ENCODE measurements at regions of chr12 and their contacts with region 1.

Region 1: GRCh38 chr12:123365025-123365917 is 624 bp upstream of the SBNO1 start:
- DNase-seq: peak; percentile 98 to 99
- H3K4me3 ChIP-seq: peak overlapping the region; percentile 87
- H3K4me3 Mint-ChIP-seq: peak overlapping the region; percentile 99
- H3K27ac Mint-ChIP-seq: peak overlapping the region; percentile 99
- H3K4me1 ChIP-seq: 0 out of 2 replicates have a peak, but pooled peaks cover 4% of the 10 kb centered on the region
- H3K4me1 Mint-ChIP-seq: peaks cover 7% of the 10 kb centered on the region
- H3K27me3 ChIP-seq: no peaks in the 10 kb centered on the region
- H3K27me3 Mint-ChIP-seq: no peaks in the 10 kb centered on the region
- CTCF ChIP-seq: peak; percentile 79 to 87

Region 2: GRCh38 chr12:123187637-123188036 is 177.6 kb before region 1 on chr12:
- CTCF ChIA-PET with region 1: no interaction called
- POLR2A ChIA-PET with region 1: no interaction called
- intact Hi-C with region 1: no loop called
- DNase-seq: no peak
- H3K4me3 ChIP-seq: no peak overlapping the region
- H3K4me3 Mint-ChIP-seq: no peak overlapping the region
- H3K27ac Mint-ChIP-seq: no peak overlapping the region
- H3K4me1 ChIP-seq: no peaks in the 10 kb centered on the region
- H3K4me1 Mint-ChIP-seq: no peaks in the 10 kb centered on the region
- H3K27me3 ChIP-seq: no peaks in the 10 kb centered on the region
- H3K27me3 Mint-ChIP-seq: no peaks in the 10 kb centered on the region
- CTCF ChIP-seq: no peak

Region 3: GRCh38 chr12:123223241-123223668 is 142.0 kb before region 1 on chr12:
- CTCF ChIA-PET with region 1: no interaction called
- POLR2A ChIA-PET with region 1: no interaction called
- intact Hi-C with region 1: no loop called
- DNase-seq: no peak
- H3K4me3 ChIP-seq: no peak overlapping the region
- H3K4me3 Mint-ChIP-seq: no peak overlapping the region
- H3K27ac Mint-ChIP-seq: no peak overlapping the region
- H3K4me1 ChIP-seq: no peaks in the 10 kb centered on the region
- H3K4me1 Mint-ChIP-seq: no peaks in the 10 kb centered on the region
- H3K27me3 ChIP-seq: no peaks in the 10 kb centered on the region
- H3K27me3 Mint-ChIP-seq: no peaks in the 10 kb centered on the region
- CTCF ChIP-seq: no peak

Region 4: GRCh38 chr12:123243671-123244262 is 121.5 kb before region 1 on chr12:
- CTCF ChIA-PET with region 1: no interaction called
- POLR2A ChIA-PET with region 1: no interaction called
- intact Hi-C with region 1: no loop called
- DNase-seq: no peak
- H3K4me3 ChIP-seq: no peak overlapping the region
- H3K4me3 Mint-ChIP-seq: no peak overlapping the region
- H3K27ac Mint-ChIP-seq: no peak overlapping the region
- H3K4me1 ChIP-seq: no peaks in the 10 kb centered on the region
- H3K4me1 Mint-ChIP-seq: no peaks in the 10 kb centered on the region
- H3K27me3 ChIP-seq: no peaks in the 10 kb centered on the region
- H3K27me3 Mint-ChIP-seq: no peaks in the 10 kb centered on the region
- CTCF ChIP-seq: no peak

Region 5: DNA sequence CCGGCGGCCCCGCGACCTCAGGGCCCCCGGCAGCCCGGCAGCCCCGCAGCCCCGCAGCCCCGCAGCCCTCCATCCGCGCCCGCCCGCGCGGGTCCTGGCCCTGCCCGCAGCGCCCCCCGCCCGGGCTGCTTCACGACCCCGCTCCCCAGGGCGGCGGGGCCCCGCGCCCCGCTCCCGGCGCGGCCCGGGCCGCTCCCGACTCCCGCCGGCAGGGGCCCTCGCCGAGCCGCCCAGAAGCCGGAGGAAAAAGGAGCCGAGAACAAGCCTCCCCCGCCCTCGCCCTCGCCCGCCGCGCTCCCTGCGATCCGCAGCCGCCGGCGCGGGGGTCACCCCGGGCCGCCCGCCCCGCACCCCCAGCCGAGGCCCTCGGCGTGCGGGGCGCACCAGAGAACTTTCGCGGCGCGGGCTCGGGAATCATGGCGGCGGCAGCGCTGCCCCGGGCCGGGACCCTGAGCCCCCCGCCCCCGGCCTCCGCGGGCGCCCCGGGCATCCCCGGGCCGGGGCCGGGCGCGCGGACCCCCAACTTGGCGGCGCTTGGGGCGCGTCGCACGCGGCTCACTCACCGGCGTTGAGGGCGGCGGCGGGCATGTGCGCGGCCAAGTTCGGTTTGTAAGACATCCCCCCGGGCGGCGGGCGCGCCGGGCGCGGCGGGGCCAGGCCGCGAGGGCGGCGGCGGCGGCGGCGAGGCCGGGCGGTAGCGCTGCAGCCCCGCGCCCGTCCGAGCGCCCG is 94.1 kb before region 1 on chr12:
- CTCF ChIA-PET with region 1: no interaction called
- POLR2A ChIA-PET with region 1: no interaction called
- intact Hi-C with region 1: loop called (anchors 2 kb)
- DNase-seq: peak; percentile 69 to 83
- H3K4me3 ChIP-seq: peak overlapping the region; percentile 63
- H3K4me3 Mint-ChIP-seq: peak overlapping the region; percentile 77
- H3K27ac Mint-ChIP-seq: no peak overlapping the region
- H3K4me1 ChIP-seq: 0 out of 2 replicates have a peak, but pooled peaks cover 5% of the 10 kb centered on the region
- H3K4me1 Mint-ChIP-seq: no peaks in the 10 kb centered on the region
- H3K27me3 ChIP-seq: no peaks in the 10 kb centered on the region
- H3K27me3 Mint-ChIP-seq: no peaks in the 10 kb centered on the region
- CTCF ChIP-seq: peak; percentile 39 to 66

Region 6: GRCh38 chr12:123382684-123383083 is 17.4 kb after region 1 on chr12:
- CTCF ChIA-PET with region 1: interaction called, 36 read pairs
- POLR2A ChIA-PET with region 1: interaction called, 57 read pairs
- intact Hi-C with region 1: loop called (anchors 1 kb)
- DNase-seq: no peak
- H3K4me3 ChIP-seq: peak overlapping the region; percentile 5; the same call in 1 of the 2 replicates
- H3K4me3 Mint-ChIP-seq: peak overlapping the region; percentile 83
- H3K27ac Mint-ChIP-seq: peak overlapping the region; percentile 29
- H3K4me1 ChIP-seq: peaks cover 4% of the 10 kb centered on the region; the same call in 1 of the 2 replicates
- H3K4me1 Mint-ChIP-seq: peaks cover 9% of the 10 kb centered on the region
- H3K27me3 ChIP-seq: no peaks in the 10 kb centered on the region
- H3K27me3 Mint-ChIP-seq: no peaks in the 10 kb centered on the region
- CTCF ChIP-seq: no peak

Region 7: GRCh38 chr12:123388177-123388947 is 23.1 kb after region 1 on chr12:
- CTCF ChIA-PET with region 1: interaction called, 36 read pairs
- POLR2A ChIA-PET with region 1: interaction called, 57 read pairs
- intact Hi-C with region 1: loop called (anchors 1 kb)
- DNase-seq: peak; percentile 67 to 87
- H3K4me3 ChIP-seq: peak overlapping the region; percentile 88
- H3K4me3 Mint-ChIP-seq: peak overlapping the region; percentile 75
- H3K27ac Mint-ChIP-seq: peak overlapping the region; percentile 66
- H3K4me1 ChIP-seq: peaks cover 4% of the 10 kb centered on the region; the same call in 1 of the 2 replicates
- H3K4me1 Mint-ChIP-seq: peaks cover 21% of the 10 kb centered on the region
- H3K27me3 ChIP-seq: no peaks in the 10 kb centered on the region
- H3K27me3 Mint-ChIP-seq: no peaks in the 10 kb centered on the region
- CTCF ChIP-seq: peak in 1 of 2 experiments; percentile 5

Region 8: DNA sequence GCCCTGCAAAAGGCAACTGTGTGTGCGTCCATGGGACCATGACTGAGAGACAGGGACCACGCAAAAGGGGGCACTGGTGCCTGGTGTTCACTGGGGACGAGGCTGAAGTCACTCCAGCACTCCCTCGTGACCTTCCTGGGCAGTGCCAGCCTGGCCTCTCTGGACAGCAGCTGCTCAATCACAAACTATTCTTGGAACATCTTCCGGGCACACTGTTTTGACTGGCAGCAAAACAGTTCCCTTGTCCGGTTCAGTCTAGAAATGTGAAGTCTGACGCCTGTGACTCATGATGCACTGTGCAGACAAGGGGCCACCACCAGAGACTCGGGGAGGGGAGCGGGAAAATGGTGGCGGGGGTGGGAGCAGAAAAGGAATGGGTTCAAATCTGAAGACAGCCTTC is 113.5 kb after region 1 on chr12:
- CTCF ChIA-PET with region 1: no interaction called
- POLR2A ChIA-PET with region 1: no interaction called
- intact Hi-C with region 1: no loop called
- DNase-seq: no peak
- H3K4me3 ChIP-seq: no peak overlapping the region
- H3K4me3 Mint-ChIP-seq: no peak overlapping the region
- H3K27ac Mint-ChIP-seq: no peak overlapping the region
- H3K4me1 ChIP-seq: no peaks in the 10 kb centered on the region
- H3K4me1 Mint-ChIP-seq: peaks cover 9% of the 10 kb centered on the region
- H3K27me3 ChIP-seq: no peaks in the 10 kb centered on the region
- H3K27me3 Mint-ChIP-seq: no peaks in the 10 kb centered on the region
- CTCF ChIP-seq: no peak

Measured in Caco-2 (cell line).